GM23248 (cell line): ENCODE measurements at regions of chr2 and their contacts with region 1.

Region 1: DNA sequence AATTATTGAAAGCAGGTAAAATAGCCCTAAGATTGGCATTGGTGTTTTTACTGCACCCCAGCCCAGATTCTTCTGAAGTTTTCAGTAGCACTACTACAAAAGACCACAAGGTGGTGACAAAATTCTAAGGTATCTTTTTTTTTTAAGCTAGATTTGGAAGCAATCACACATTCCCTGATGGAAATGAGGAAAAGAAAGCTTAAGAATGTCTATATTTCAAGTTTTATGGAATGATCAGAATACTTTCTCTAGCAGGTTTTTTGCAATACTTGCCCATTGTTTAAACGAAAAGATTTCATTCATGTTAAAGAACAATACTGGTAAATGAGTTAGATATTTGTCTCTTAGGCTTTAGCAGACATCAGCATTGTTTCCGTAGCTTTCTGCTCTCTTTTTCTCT is 32.1 kb upstream of the ZNF638 start:
- DNase-seq: peak; percentile 50
- H3K4me3 ChIP-seq: no peak overlapping the region
- H3K27ac ChIP-seq: no peak overlapping the region
- H3K4me1 ChIP-seq: no peaks in the 10 kb centered on the region
- H3K27me3 ChIP-seq: no peaks in the 10 kb centered on the region

Region 2: DNA sequence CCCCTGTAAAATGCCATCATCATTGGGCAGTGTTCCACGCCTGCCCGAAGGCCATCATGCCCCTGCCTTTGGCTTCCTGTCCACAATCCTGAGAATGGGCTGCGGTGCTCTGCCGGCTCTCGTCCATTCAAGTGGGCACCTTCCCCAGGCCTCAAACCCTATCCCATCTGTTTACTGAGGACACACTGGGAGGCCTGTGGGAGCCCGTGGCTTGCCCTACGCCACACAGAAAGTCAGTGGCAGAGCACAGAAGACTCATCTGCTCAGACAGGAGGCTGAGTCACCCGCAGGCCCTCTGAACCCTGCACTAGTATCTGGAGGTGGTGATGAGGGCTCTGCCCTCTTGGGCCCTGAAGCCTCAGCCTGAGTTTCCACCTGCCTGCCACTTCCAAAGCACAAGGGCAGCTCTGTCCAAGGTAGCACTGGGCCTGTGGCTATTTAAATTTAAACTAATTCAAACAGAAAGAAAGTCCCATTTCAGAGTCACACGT is 340.2 kb before region 1 on chr2:
- in situ Hi-C with region 1: no loop called
- DNase-seq: no peak
- H3K4me3 ChIP-seq: no peak overlapping the region
- H3K27ac ChIP-seq: no peak overlapping the region
- H3K4me1 ChIP-seq: no peaks in the 10 kb centered on the region
- H3K27me3 ChIP-seq: peaks cover 28% of the 10 kb centered on the region; the same call in 1 of the 2 replicates

Region 3: DNA sequence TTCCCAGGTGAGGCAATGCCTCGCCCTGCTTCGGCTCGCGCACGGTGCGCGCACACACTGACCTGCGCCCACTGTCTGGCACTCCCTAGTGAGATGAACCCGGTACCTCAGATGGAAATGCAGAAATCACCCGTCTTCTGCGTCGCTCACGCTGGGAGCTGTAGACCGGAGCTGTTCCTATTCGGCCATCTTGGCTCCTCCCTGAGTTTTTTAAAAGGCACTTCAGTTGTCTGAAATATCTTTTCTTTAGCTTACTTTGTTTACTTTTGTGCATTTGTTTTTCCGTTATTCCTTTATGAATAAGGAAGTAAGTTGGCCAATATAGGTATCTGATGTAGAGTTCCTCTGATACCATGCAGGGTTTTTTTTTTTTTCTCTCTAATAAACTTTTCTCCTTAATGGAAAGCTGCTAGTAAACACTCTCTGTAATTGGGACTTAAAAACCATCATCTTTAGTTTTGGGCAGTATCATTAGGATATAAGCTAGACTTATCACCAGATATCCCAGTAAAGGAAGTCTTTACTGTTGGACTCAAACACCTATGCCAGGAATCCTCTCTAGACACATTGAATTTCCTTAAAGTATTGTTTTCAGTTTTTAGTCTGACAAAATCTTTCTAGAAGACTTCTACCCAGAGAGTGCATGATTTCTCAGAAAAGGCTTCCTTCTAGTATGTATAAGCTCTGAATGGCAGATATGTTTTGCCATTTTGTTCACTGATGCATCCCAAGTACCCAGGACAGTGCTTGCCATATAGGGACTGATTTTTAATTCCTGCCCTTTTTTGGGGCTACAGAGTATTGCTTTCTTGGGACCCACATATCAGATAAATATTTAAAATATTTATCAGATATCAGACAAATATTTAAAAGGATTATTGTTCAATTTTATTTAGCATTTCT is 118.0 kb after region 1 on chr2:
- in situ Hi-C with region 1: no loop called
- DNase-seq: no peak
- H3K4me3 ChIP-seq: no peak overlapping the region
- H3K27ac ChIP-seq: no peak overlapping the region
- H3K4me1 ChIP-seq: no peaks in the 10 kb centered on the region
- H3K27me3 ChIP-seq: no peaks in the 10 kb centered on the region

Region 4: DNA sequence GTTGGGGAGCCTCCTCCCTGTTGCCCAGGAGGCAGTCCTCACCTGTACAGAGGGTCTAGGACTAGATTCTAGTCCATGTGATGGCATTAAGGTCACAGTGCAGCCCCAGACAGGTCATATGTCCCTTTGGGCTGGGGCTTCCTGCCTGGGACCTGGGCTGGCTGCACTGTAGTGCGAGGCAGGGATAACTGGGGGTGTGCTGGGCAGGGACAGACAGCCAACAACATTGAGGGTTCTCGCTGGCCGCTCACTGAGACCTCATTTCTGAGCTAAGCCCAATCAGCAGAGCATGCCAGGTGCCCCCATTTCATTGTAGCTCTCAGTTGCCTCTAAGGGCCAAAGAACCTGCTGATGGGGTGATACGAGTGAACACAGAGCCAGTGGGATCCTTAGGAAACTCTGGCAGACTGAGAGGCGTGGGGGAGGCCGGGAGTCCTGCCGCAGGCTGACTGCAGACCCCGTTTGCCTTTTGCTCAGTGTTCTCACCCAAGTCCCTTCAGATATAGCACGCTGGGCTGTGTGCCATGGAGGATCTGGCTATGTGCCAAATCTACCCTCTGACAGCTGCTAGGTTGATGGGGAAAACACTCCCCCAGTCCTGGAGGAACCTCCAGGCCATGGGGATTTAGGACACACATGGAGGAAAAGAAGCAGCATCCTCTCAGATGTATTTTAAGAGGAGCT is 205.7 kb after region 1 on chr2:
- in situ Hi-C with region 1: loop called (anchors 5 kb)
- DNase-seq: no peak
- H3K4me3 ChIP-seq: no peak overlapping the region
- H3K27ac ChIP-seq: no peak overlapping the region
- H3K4me1 ChIP-seq: no peaks in the 10 kb centered on the region
- H3K27me3 ChIP-seq: no peaks in the 10 kb centered on the region